ENCODE measurements at regions of chr12 and their contacts with region 1.

Region 1: DNA sequence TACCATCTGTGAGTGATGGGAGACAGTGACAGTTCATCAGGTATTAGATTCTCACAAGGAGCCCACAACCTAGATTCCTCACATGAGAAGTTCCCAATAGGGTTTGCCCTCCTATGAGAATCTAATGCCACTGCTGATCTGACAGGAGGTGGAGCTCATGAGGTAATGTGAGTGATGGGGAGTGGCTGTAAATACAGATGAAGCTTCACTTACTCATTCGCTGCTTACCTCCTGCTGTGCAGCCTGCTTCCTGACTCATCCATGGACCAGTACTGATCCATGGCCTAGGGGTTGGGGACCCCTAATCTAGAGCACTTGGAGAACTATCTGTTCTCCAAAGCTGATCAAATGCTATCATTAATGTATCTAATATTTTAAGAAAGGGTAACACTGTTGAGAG is 17.7 kb downstream of the CLEC2D start:
- DNase-seq: peak; percentile 8 to 75 (median 15)
- ATAC-seq: peak; percentile 68
- H3K4me3 ChIP-seq: no peak overlapping the region
- H3K27ac ChIP-seq: no peak overlapping the region
- H3K4me1 ChIP-seq: peaks cover 4 to 14% of the 10 kb centered on the region in 2 experiments; a peak in 3 of 5 replicates
- H3K27me3 ChIP-seq: no peaks in the 10 kb centered on the region
- CTCF ChIP-seq: no peak
- EP300 ChIP-seq: no peak
- POLR2A ChIP-seq: no peak
- RAD21 ChIP-seq: no peak

Region 2: GRCh38 chr12:9647825-9648700 is 39.2 kb before region 1 on chr12:
- CTCF ChIA-PET with region 1: no interaction called
- POLR2A ChIA-PET with region 1: interaction called, 4 read pairs
- in situ Hi-C with region 1: no loop called
- intact Hi-C with region 1: loop called (anchors 5 kb)
- DNase-seq: peak; percentile 86 to 91 (median 88)
- ATAC-seq: peak; percentile 90
- H3K4me3 ChIP-seq: peak overlapping the region; percentile 57
- H3K27ac ChIP-seq: peak overlapping the region; percentile 92
- H3K4me1 ChIP-seq: peaks cover 0 to 5% of the 10 kb centered on the region in 2 experiments; a peak in 3 of 5 replicates
- H3K27me3 ChIP-seq: no peaks in the 10 kb centered on the region
- CTCF ChIP-seq: no peak
- EP300 ChIP-seq: peak; percentile 12
- POLR2A ChIP-seq: peak; percentile 72
- RAD21 ChIP-seq: no peak

Region 3: GRCh38 chr12:9721394-9722092 is 34.3 kb after region 1 on chr12:
- CTCF ChIA-PET with region 1: no interaction called
- POLR2A ChIA-PET with region 1: no interaction called
- in situ Hi-C with region 1: no loop called
- intact Hi-C with region 1: no loop called
- DNase-seq: no peak
- ATAC-seq: no peak
- H3K4me3 ChIP-seq: no peak overlapping the region
- H3K27ac ChIP-seq: no peak overlapping the region
- H3K4me1 ChIP-seq: no peaks in the 10 kb centered on the region; a peak in 2 of 5 replicates
- H3K27me3 ChIP-seq: no peaks in the 10 kb centered on the region
- CTCF ChIP-seq: no peak
- EP300 ChIP-seq: peak; percentile 21; the same call in 1 of the 2 replicates
- POLR2A ChIP-seq: no peak
- RAD21 ChIP-seq: no peak

Region 4: GRCh38 chr12:10048526-10048925 is 361.3 kb after region 1 on chr12:
- CTCF ChIA-PET with region 1: no interaction called
- POLR2A ChIA-PET with region 1: no interaction called
- in situ Hi-C with region 1: no loop called
- intact Hi-C with region 1: no loop called
- DNase-seq: no peak
- ATAC-seq: no peak
- H3K4me3 ChIP-seq: no peak overlapping the region
- H3K27ac ChIP-seq: no peak overlapping the region
- H3K4me1 ChIP-seq: no peaks in the 10 kb centered on the region
- H3K27me3 ChIP-seq: no peaks in the 10 kb centered on the region
- CTCF ChIP-seq: no peak
- EP300 ChIP-seq: no peak
- POLR2A ChIP-seq: no peak
- RAD21 ChIP-seq: no peak